ENCODE measurements at regions of chr4 and their contacts with region 1.

Region 1: DNA sequence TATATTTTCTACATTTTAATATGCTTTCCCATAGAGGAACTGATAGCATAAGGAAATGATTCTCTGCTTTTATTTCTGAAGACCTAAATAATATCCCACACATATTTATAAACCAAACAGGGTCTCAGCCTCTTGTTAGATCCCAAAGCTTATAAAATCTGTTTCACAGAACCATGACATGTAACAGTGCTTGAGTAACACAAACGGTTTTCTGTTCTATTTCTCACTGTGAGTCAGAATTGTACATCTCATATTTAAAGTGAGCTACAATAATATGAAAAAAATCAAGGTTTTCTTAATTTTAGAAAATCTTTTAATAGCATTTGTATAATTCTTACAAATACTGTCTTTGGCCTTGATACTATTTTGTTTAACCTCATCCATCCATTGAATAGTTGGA is 51.2 kb downstream of the NR3C2 start:
- DNase-seq: no peak
- H3K4me3 ChIP-seq: no peak overlapping the region
- H3K27ac ChIP-seq: no peak overlapping the region
- H3K4me1 ChIP-seq: no peaks in the 10 kb centered on the region
- H3K27me3 ChIP-seq: no peaks in the 10 kb centered on the region
- CTCF ChIP-seq: no peak
- POLR2A ChIP-seq: no peak

Region 2: GRCh38 chr4:148405161-148405893 is 14.3 kb after region 1 on chr4:
- CTCF ChIA-PET with region 1: interaction called, 3 read pairs
- POLR2A ChIA-PET with region 1: no interaction called
- dilution Hi-C with region 1: no loop called
- intact Hi-C with region 1: loop called (anchors 2 kb)
- DNase-seq: no peak
- H3K4me3 ChIP-seq: no peak overlapping the region
- H3K27ac ChIP-seq: no peak overlapping the region
- H3K4me1 ChIP-seq: no peaks in the 10 kb centered on the region
- H3K27me3 ChIP-seq: no peaks in the 10 kb centered on the region
- CTCF ChIP-seq: no peak
- POLR2A ChIP-seq: no peak